Astrocyte of the cerebellum (primary cell): ENCODE measurements at regions of chr4 and their contacts with region 1.

Region 1: GRCh38 chr4:112189754-112190153 is 41.8 kb upstream of the AP1AR start:
- DNase-seq: no peak
- H3K4me3 ChIP-seq: no peak overlapping the region
- CTCF ChIP-seq: peak; percentile 24

Region 2: GRCh38 chr4:112099701-112100297 is 90.0 kb before region 1 on chr4:
- in situ Hi-C with region 1: loop called (anchors 5 kb)
- DNase-seq: peak; percentile 62
- H3K4me3 ChIP-seq: no peak overlapping the region
- CTCF ChIP-seq: peak; percentile 26